ENCODE measurements at regions of chr3 and their contacts with region 1.

Region 1: GRCh38 chr3:12841149-12841970 is at the start of gene RPL32:
- DNase-seq: peak; percentile 72 to 94 (median 92)
- ATAC-seq: peak; percentile 95
- H3K4me3 ChIP-seq: peak within 1 kb of the TSS; percentile 90
- H3K4me3 Mint-ChIP-seq: peak within 1 kb of the TSS; percentile 92 to 97 (median 96)
- H3K27ac ChIP-seq: peak within 1 kb of the TSS; percentile 92
- H3K27ac Mint-ChIP-seq: peak within 1 kb of the TSS; percentile 98 to 100 (median 100)
- H3K4me1 ChIP-seq: peaks cover 16 to 28% of the 10 kb centered on the region in 2 donors
- H3K4me1 Mint-ChIP-seq: peaks cover 31 to 54% (median 47%) of the 10 kb centered on the region in 7 donors
- H3K27me3 ChIP-seq: no peaks in the 10 kb centered on the region
- H3K27me3 Mint-ChIP-seq: no peaks in the 10 kb centered on the region
- total RNA-seq, gene RPL32: 1,890 to 4,471 (median 4,246) TPM

Region 2: DNA sequence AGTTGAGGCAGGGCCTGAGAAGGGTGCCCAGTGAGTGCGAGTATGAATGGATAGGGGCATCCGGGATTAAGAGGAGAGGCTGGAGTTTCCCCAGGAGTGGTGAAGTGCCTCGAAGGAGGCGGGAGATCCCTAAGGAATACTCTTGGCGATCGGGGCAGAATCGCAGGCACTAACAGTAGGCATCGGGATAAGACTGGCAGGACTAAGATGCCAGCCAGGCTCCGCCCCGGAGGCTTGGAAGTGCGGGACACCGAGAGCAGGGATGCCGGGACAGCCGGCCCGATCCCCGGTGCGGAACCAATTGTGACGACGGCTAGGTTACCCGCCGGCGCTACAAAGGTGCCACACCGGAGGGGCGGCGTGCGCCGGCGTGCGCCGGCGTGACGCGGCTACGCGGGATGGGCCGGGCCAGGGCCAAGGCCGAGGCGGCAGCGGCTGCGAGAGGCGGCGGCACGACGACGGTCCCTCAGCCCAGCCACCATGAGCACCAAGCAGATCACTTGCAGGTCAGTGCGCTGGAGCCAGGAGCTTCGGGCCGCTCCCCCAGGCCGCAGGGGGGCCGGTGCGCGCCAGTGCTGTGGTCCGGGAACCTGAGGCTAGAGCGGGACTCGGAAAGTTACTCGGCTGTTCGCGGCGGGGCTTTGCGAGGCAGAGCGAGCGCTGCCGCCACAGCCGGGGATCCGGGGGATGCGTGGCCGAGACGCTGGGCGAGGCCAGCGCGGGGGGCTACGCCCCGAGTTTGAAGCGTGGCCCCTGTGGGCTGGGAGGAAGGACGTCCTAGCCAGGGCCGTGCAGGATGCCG is 284.5 kb before region 1 on chr3 and contains the start of gene MKRN2:
- CTCF ChIA-PET with region 1: no interaction called
- POLR2A ChIA-PET with region 1: interaction called, 3 read pairs
- intact Hi-C with region 1: loop called (anchors 1 kb)
- DNase-seq: peak; percentile 74 to 89 (median 83)
- ATAC-seq: peak; percentile 98
- H3K4me3 ChIP-seq: peak within 1 kb of the TSS; percentile 95
- H3K4me3 Mint-ChIP-seq: peak within 1 kb of the TSS; percentile 90 to 100 (median 96)
- H3K27ac ChIP-seq: peak within 1 kb of the TSS; percentile 94
- H3K27ac Mint-ChIP-seq: peak within 1 kb of the TSS; percentile 87 to 95 (median 93)
- H3K4me1 ChIP-seq: peaks cover 31 to 38% of the 10 kb centered on the region in 2 donors
- H3K4me1 Mint-ChIP-seq: peaks cover 40 to 71% (median 68%) of the 10 kb centered on the region in 7 donors
- H3K27me3 ChIP-seq: peaks cover 6% of the 10 kb centered on the region in 2 donors
- H3K27me3 Mint-ChIP-seq: peaks cover 22 to 37% (median 28%) of the 10 kb centered on the region in 5 donors
- total RNA-seq, gene MKRN2: 21.9 to 34.5 (median 25.4) TPM

Region 3: GRCh38 chr3:12782172-12782815 is 59.1 kb before region 1 on chr3:
- CTCF ChIA-PET with region 1: interaction called, 3 read pairs
- POLR2A ChIA-PET with region 1: interaction called, 8 read pairs
- intact Hi-C with region 1: loop called in 1 of 2 experiments (anchors 1 kb)
- DNase-seq: no peak
- ATAC-seq: no peak
- H3K4me3 ChIP-seq: no peak overlapping the region
- H3K4me3 Mint-ChIP-seq: no peak overlapping the region
- H3K27ac ChIP-seq: no peak overlapping the region
- H3K27ac Mint-ChIP-seq: no peak overlapping the region
- H3K4me1 ChIP-seq: no peaks in the 10 kb centered on the region
- H3K4me1 Mint-ChIP-seq: no peaks in the 10 kb centered on the region
- H3K27me3 ChIP-seq: no peaks in the 10 kb centered on the region
- H3K27me3 Mint-ChIP-seq: peaks cover 0 to 28% (median 21%) of the 10 kb centered on the region in 5 donors

Region 4: GRCh38 chr3:12830785-12831156 is 10.6 kb before region 1 on chr3:
- CTCF ChIA-PET with region 1: interaction called, 10 read pairs
- POLR2A ChIA-PET with region 1: interaction called, 15 read pairs
- intact Hi-C with region 1: no loop called
- DNase-seq: no peak
- ATAC-seq: no peak
- H3K4me3 ChIP-seq: no peak overlapping the region
- H3K4me3 Mint-ChIP-seq: no peak overlapping the region
- H3K27ac ChIP-seq: no peak overlapping the region
- H3K27ac Mint-ChIP-seq: peak overlapping the region in 1 of 9 donors; percentile 78
- H3K4me1 ChIP-seq: no peaks in the 10 kb centered on the region
- H3K4me1 Mint-ChIP-seq: peaks cover 0 to 2% (median 0%) of the 10 kb centered on the region in 7 donors
- H3K27me3 ChIP-seq: no peaks in the 10 kb centered on the region
- H3K27me3 Mint-ChIP-seq: no peaks in the 10 kb centered on the region

Region 5: GRCh38 chr3:13012228-13012691 is 170.9 kb after region 1 on chr3:
- CTCF ChIA-PET with region 1: no interaction called
- POLR2A ChIA-PET with region 1: interaction called, 4 read pairs
- intact Hi-C with region 1: loop called in 1 of 2 experiments (anchors 1 kb)
- DNase-seq: peak in 2 of 9 donors; percentile 24 to 52
- ATAC-seq: peak; percentile 60
- H3K4me3 ChIP-seq: peak overlapping the region; percentile 38
- H3K4me3 Mint-ChIP-seq: peak overlapping the region; percentile 69 to 96 (median 84)
- H3K27ac ChIP-seq: peak overlapping the region; percentile 99
- H3K27ac Mint-ChIP-seq: peak overlapping the region; percentile 96 to 100 (median 98)
- H3K4me1 ChIP-seq: peaks cover 84 to 90% of the 10 kb centered on the region in 2 donors
- H3K4me1 Mint-ChIP-seq: peaks cover 72 to 92% (median 77%) of the 10 kb centered on the region in 7 donors
- H3K27me3 ChIP-seq: no peaks in the 10 kb centered on the region
- H3K27me3 Mint-ChIP-seq: no peaks in the 10 kb centered on the region

Region 6: DNA sequence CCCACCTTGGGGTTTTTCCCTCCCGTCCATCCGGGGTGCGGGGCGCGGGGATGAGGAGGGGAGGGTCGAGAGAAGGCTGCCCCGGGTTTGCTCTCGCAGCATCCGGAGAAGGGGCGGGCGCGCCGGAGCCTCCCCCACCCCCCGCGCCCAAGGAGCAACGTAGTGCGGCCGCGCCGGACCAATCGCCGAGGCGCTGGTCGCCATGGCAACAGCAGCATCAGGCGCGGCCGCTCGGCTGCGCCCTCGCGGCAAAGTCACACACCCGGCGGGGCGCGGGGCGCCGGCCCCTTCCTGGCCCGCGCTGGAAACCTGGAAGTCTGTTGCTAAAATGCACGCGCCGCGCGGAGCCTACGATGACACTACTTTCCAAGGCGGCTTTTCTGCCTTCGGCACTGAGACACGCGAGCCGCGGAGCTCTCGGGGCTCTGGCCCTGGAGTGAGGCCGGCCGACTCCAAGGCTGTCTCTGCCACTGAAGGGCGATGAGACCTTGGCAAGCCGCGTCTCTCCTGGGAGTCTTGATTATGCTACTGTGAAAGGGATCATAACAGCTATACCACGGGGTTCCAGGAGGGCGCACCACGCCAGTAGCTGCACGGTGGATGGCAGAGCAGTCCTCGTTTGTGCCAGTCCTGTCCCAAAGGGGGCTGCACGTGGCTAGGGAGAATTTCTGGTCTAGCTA is 232.1 kb after region 1 on chr3 and contains the start of gene IQSEC1:
- CTCF ChIA-PET with region 1: no interaction called
- POLR2A ChIA-PET with region 1: no interaction called
- intact Hi-C with region 1: no loop called
- DNase-seq: peak; percentile 15 to 70 (median 51)
- ATAC-seq: peak; percentile 80
- H3K4me3 ChIP-seq: peak within 1 kb of the TSS; percentile 53
- H3K4me3 Mint-ChIP-seq: peak within 1 kb of the TSS; percentile 59 to 86 (median 77)
- H3K27ac ChIP-seq: no peak within 1 kb of the TSS
- H3K27ac Mint-ChIP-seq: peak within 1 kb of the TSS in 6 of 9 donors; percentile 36 to 77 (median 60)
- H3K4me1 ChIP-seq: peaks cover 28 to 35% of the 10 kb centered on the region in 2 donors
- H3K4me1 Mint-ChIP-seq: peaks cover 18 to 46% (median 39%) of the 10 kb centered on the region in 7 donors
- H3K27me3 ChIP-seq: peaks cover 0 to 3% of the 10 kb centered on the region in 2 donors
- H3K27me3 Mint-ChIP-seq: peaks cover 8 to 45% (median 12%) of the 10 kb centered on the region in 5 donors
- total RNA-seq, gene IQSEC1: 51.8 to 163 (median 79.5) TPM

Region 7: DNA sequence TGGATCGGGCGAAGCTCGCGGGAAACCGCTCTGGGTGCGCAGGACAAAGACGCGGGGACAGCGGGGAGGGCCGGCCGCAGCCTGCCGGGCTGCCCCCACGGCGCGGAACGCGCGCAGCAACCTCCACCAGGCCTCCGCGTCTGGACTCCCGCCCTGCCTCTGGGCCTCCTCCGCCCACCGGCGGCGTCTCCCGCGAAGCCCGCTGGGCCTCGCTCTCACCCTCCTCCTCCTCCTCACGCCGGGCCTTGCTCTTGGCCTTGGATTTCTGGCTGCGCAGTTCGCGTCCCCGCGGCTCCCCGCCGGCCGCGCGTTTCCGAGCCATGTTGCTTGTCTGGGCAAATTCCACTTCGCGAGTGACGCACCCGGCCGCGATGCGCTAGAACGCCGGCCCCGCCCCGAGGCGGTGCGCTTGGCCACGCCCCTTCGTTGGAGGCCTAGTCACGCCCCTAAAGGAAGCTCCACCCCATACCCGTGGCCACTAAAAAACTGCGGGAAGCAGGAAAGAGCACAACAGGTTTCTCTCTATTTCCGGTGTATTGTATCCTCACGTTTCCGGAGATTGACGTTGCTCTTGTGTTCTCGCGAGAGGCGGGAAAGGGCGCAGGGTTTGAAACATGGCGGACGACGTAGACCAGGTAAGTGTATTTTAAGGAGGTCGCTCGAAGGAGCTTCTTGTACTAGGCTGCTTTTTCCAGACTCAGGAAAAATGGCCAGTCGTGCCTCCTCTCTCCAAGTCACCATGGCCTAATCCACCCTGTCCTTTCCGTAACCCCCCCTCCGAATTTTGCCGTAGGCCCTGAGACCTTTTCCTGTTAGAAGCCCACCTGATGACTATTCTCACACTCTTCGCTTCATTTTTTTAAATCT is 1337.1 kb after region 1 on chr3 and contains the starts of genes LSM3 and XPC:
- CTCF ChIA-PET with region 1: no interaction called
- POLR2A ChIA-PET with region 1: interaction called, 4 read pairs
- intact Hi-C with region 1: loop called in 1 of 2 experiments (anchors 2 kb)
- DNase-seq: peak; percentile 98 to 100 (median 99)
- ATAC-seq: peak; percentile 98
- H3K4me3 ChIP-seq: peak within 1 kb of the TSS; percentile 68
- H3K4me3 Mint-ChIP-seq: peak within 1 kb of the TSS; percentile 94 to 100 (median 98)
- H3K27ac ChIP-seq: peak within 1 kb of the TSS; percentile 99
- H3K27ac Mint-ChIP-seq: peak within 1 kb of the TSS; percentile 96 to 100 (median 99)
- H3K4me1 ChIP-seq: peaks cover 37 to 48% of the 10 kb centered on the region in 2 donors
- H3K4me1 Mint-ChIP-seq: peaks cover 45 to 85% (median 82%) of the 10 kb centered on the region in 7 donors
- H3K27me3 ChIP-seq: no peaks in the 10 kb centered on the region
- H3K27me3 Mint-ChIP-seq: peaks cover 0 to 2% (median 0%) of the 10 kb centered on the region in 5 donors
- total RNA-seq, gene LSM3: 6.0 to 14.1 (median 8.0) TPM
- total RNA-seq, gene XPC: 56.3 to 94.8 (median 78.1) TPM